HEK293T (cell line): ENCODE measurements at regions of chr22 and their contacts with region 1.

Region 1: GRCh38 chr22:20565079-20565734 is 57.8 kb downstream of the MED15 start:
- DNase-seq: no peak

Region 2: GRCh38 chr22:20531315-20532201 is 33.6 kb before region 1 on chr22:
- CTCF ChIA-PET with region 1: no interaction called
- POLR2A ChIA-PET with region 1: no interaction called
- DNase-seq: no peak

Region 3: DNA sequence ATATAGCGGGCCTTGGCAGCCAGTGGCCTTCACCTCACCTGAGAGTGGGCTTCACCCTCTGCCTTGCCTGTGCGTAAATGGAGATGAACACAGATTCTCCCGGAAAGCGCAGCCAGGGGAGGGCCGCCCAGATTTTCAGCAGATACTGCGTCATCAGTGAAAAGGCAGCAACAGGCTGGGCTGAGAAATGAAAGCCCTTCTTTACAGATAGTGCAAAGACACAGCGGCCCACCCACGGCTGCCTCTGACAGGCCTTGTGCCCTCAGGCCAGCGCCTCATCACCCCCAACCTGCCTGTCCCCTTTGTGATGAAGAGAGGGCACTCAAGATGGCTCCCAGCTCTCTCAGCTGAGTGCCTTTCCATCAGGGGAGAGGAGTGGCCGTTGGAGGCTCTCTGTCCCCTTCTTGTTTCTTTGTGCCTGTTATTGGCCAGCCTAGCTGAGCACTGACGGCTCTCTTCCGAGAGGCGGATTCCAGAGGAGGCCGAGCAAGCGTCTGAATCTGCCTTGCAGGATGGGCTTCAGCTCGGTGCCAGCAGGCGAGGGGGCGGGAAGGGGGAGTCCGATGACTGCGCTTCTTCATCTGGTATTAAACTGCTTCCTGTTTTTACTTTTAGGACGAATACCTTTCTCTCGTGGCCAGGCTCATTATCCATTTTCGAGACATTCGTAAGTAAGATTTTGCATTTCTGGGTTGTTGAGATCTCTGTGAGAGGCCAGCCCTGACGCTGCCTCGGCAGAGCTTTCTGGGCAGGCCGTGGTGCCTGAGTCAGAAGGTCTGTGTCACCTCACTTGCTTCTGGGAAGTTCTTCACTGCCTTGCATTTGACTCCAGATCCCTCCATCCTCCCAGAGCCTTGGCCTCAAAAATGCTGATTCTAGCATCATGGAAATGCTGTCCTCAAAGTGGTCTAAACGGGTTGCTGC is 14.1 kb before region 1 on chr22:
- CTCF ChIA-PET with region 1: interaction called, 11 read pairs
- POLR2A ChIA-PET with region 1: no interaction called
- DNase-seq: no peak

Region 4: DNA sequence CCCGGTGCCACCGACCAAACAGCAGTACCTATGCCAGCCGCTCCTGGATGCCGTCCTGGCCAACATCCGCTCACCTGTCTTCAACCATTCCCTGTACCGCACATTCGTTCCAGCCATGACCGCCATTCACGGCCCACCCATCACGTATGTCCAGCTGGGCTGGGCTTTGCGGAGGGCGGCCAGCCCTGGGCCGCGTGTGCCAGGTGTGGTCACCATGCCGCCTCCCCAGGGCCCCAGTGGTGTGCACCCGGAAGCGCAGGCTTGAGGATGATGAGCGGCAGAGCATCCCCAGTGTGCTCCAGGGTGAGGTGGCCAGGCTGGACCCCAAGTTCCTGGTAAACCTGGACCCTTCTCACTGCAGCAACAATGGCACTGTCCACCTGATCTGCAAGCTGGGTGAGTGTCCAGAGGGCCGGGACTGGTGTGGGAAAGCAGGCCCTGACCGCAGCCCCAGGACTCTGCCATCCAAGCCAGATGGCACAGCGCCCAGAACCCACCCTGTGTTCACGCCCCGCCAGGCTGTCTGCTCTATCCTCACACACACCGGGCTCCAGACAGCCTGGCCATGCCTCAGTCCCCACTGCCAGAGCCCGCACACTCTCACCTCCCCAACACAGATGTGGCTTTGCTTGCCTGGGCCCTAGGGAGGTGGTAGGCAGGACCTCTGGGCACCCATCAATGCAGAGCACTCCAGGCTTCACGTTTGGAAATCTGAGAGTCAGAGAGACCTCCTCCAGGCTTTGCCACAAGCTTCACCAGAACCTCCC is 19.8 kb after region 1 on chr22:
- CTCF ChIA-PET with region 1: no interaction called
- POLR2A ChIA-PET with region 1: no interaction called
- DNase-seq: no peak